Activated CD4-positive, alpha-beta T cell treated with anti-CD3 and anti-CD28 coated beads for 36 hours (primary cell): ENCODE measurements at regions of chr4 and their contacts with region 1.

Region 1: DNA sequence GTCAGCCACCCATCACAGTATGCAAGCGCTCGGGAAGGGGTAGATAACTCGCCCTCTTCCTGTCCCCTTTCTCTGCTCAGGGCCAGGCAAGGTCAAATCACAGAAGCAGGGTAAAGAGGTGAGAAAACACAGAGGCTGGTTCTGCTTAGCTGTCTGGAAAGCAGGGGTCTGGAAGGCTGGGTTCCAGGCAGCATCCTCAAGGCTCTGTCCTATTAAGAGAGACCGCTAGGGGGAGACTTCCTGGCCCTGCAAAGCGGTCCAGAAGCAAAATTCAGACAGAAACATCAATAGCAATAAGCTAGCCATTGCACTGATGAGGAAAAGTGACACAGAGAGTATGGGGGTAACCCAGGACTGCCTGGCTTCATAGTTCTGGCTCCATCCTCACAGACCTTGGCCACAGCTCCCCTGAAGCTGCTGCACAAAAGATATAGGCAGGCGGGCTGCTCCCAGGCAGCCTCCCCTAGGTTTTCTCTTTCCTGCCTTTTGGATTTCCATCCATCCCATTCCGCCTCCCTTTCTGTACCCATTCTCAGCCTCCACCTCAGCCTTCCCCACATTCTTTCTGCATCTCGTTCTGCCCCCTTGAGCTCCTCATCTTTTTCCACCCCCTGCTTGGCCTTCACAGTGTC is 308.5 kb downstream of the EVC2 start:
- DNase-seq: no peak
- ATAC-seq: no peak
- H3K4me3 Mint-ChIP-seq: no peak overlapping the region
- H3K27ac Mint-ChIP-seq: no peak overlapping the region
- H3K4me1 Mint-ChIP-seq: no peaks in the 10 kb centered on the region
- H3K27me3 Mint-ChIP-seq: no peaks in the 10 kb centered on the region

Region 2: GRCh38 chr4:5812506-5813229 is 412.8 kb after region 1 on chr4:
- CTCF ChIA-PET with region 1: interaction called, 4 read pairs
- POLR2A ChIA-PET with region 1: no interaction called
- intact Hi-C with region 1: loop called in 1 of 2 experiments (anchors 5 kb)
- DNase-seq: peak; percentile 35
- ATAC-seq: peak; percentile 49
- H3K4me3 Mint-ChIP-seq: no peak overlapping the region
- H3K27ac Mint-ChIP-seq: no peak overlapping the region
- H3K4me1 Mint-ChIP-seq: no peaks in the 10 kb centered on the region
- H3K27me3 Mint-ChIP-seq: peaks cover 3% of the 10 kb centered on the region